ENCODE measurements at regions of chr6 and their contacts with region 1.

Region 1: DNA sequence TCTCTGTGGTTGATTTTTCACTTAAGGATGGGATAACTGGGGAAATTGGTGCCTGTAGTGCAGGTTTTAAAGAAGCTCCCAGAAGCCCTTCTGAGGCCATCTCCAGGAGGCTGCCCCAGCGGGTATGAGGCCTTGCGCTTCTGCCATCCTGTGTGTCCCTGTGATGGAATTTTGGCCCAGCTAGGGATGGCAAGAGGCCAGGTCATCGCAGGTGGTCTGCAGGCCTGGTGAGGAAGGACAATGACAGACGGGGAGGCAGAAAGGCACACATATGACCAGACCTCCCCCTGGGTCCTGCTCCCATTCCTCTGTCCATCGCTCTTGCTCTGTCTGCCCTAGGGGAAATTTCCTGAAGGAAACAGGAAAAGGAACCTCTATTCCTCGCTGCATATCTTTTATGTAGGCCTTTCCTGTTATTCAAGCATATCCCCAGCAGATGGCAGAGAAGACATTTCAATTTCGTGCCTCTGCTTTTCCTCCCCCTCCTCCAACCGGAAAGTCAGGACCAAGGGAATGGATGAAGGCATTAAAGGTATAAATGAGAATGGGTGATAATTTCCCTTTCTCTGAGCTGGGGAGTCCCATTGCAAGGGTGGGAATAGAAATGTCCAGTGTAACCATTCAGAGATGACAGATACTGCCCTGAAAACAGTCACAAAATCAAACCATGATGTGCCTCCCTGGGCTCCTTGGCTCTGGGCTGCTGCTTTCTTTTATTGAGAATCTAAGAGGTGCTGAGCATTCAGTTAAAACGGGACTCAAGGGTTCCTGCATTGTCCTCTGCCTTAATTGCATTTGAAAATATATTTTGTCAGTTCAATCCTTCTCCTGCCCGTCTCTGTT is 17.6 kb upstream of the HLA-F start:
- DNase-seq: no peak
- ATAC-seq: no peak
- H3K4me3 Mint-ChIP-seq: no peak overlapping the region
- H3K27ac Mint-ChIP-seq: no peak overlapping the region
- H3K4me1 Mint-ChIP-seq: peaks cover 44% of the 10 kb centered on the region
- H3K27me3 Mint-ChIP-seq: peaks cover 31% of the 10 kb centered on the region

Region 2: DNA sequence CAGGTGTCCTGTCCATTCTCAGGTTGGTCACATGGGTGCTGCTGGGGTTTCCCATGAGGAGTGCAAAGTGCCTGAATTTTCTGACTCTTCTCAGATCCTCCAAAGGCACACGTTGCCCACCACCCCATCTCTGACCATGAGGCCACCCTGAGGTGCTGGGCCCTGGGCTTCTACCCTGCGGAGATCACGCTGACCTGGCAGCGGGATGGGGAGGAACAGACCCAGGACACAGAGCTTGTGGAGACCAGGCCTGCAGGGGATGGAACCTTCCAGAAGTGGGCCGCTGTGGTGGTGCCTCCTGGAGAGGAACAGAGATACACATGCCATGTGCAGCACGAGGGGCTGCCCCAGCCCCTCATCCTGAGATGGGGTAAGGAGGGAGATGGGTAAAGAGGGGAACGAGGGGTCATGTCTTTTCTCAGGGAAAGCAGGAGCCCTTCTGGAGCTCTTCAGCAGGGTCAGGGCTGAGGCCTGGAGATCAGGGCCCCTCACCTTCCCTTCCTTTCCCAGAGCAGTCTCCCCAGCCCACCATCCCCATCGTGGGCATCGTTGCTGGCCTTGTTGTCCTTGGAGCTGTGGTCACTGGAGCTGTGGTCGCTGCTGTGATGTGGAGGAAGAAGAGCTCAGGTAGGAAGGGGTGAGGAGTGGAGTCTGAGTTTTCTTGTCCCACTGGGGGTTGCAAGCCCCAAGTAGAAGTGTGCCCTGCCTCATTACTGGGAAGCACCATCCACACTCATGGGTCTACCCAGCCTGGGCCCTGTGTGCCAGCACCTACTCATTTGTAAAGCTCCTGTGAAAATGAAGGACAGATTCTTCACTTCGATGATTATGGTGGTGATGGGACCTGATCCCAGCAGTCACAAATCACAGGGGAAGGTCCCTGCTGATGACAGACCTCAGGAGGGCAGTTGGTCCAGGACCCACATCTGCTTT is 19.6 kb after region 1 on chr6:
- CTCF ChIA-PET with region 1: interaction called, 10 read pairs
- DNase-seq: no peak
- ATAC-seq: no peak
- H3K4me3 Mint-ChIP-seq: peak overlapping the region; percentile 98
- H3K27ac Mint-ChIP-seq: peak overlapping the region; percentile 93
- H3K4me1 Mint-ChIP-seq: peaks cover 55% of the 10 kb centered on the region
- H3K27me3 Mint-ChIP-seq: no peaks in the 10 kb centered on the region

Region 3: GRCh38 chr6:29752451-29753308 is 47.1 kb after region 1 on chr6:
- CTCF ChIA-PET with region 1: interaction called, 22 read pairs
- DNase-seq: peak; percentile 91
- ATAC-seq: peak; percentile 70
- H3K4me3 Mint-ChIP-seq: peak overlapping the region; percentile 85
- H3K27ac Mint-ChIP-seq: peak overlapping the region; percentile 94
- H3K4me1 Mint-ChIP-seq: peaks cover 48% of the 10 kb centered on the region
- H3K27me3 Mint-ChIP-seq: no peaks in the 10 kb centered on the region

Region 4: DNA sequence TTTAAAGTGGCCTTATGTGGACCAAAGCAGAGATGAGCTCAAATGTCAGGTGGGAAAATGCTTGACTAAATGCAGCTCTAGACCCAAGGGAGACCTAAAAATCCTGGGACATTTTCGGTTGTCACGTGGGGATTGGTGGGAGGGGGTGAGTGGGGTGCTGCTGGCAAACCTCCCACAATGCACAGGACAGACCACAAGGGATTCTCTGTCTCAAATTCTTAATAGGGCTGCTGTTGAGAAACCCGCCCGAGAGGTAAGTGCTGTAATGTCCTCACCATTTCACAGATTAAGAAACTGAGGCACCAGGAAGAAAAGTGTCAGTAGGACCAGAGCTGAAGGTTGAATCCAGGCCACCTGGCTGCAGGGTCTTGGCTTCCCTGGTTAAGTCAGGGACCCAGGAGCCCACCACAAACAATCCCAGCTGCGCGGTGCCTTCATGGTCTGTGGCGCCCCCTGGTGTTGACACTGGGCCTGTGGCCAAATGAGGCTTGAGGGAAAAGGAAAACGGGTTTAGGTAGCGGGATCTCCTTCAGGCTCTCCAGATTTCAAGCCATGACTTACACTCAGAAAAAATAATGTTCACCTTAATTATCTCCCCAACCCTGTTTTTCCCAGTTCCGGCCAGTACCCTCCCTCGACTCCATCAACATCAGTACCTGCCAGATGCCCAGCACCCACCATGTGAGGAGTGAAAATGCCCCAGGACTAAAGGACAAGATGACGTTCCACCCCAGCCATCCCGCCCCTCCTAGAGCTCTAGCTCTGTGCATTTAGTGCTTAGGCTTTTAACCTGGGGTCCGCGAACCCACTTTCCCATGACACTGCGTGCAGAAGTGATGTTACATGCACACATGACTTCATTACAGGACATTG is 129.2 kb after region 1 on chr6:
- CTCF ChIA-PET with region 1: interaction called, 14 read pairs
- DNase-seq: peak; percentile 64
- ATAC-seq: peak; percentile 68
- H3K4me3 Mint-ChIP-seq: no peak overlapping the region
- H3K27ac Mint-ChIP-seq: no peak overlapping the region
- H3K4me1 Mint-ChIP-seq: peaks cover 11% of the 10 kb centered on the region
- H3K27me3 Mint-ChIP-seq: peaks cover 77% of the 10 kb centered on the region